ENCODE measurements at regions of chr3 and their contacts with region 1.

Region 1: GRCh38 chr3:169149349-169149890 is 514.1 kb downstream of the MECOM start:
- DNase-seq: peak; percentile 84 to 85
- ATAC-seq: peak; percentile 80 to 91 (median 82)
- H3K4me3 ChIP-seq: peak overlapping the region in 9 of 10 donors; percentile 13 to 69 (median 61)
- H3K27ac ChIP-seq: peak overlapping the region; percentile 26 to 96 (median 78)
- H3K4me1 ChIP-seq: peaks cover 0 to 38% (median 16%) of the 10 kb centered on the region in 9 donors
- H3K27me3 ChIP-seq: peaks cover 0 to 78% (median 32%) of the 10 kb centered on the region in 7 donors
- CTCF ChIP-seq: peak; percentile 67 to 93 (median 86)

Region 2: GRCh38 chr3:169041677-169042171 is 107.7 kb before region 1 on chr3:
- intact Hi-C with region 1: loop called in 1 of 10 experiments (anchors 10 kb)
- DNase-seq: no peak
- ATAC-seq: peak in 6 of 8 donors; percentile 20 to 79 (median 68)
- H3K4me3 ChIP-seq: peak overlapping the region in 3 of 10 donors; percentile 11 to 24 (median 13)
- H3K27ac ChIP-seq: peak overlapping the region in 6 of 10 donors; percentile 10 to 38 (median 27)
- H3K4me1 ChIP-seq: peaks cover 0 to 7% (median 0%) of the 10 kb centered on the region in 9 donors
- H3K27me3 ChIP-seq: no peaks in the 10 kb centered on the region
- CTCF ChIP-seq: peak; percentile 27 to 75 (median 59)

Region 3: DNA sequence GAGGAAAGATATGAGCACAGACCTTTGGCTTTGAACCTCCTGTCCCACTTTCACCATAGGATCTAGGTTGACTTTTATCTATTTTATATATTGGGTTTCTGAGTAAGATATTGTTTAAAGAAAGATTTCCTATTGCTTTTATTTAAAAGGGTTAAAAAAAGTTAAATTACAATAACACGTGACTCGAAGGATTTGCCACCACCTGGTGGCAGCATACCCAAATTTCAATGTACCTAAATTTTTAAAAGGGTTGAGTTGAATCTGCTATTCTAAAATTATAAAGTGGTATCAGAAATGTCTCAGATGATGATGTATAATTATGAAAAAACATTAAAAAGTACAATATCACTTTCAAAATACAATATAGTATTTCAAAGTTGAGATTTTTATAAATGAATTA is 145.7 kb after region 1 on chr3:
- intact Hi-C with region 1: loop called in 3 of 10 experiments (anchors 5 to 10 kb)
- DNase-seq: no peak
- ATAC-seq: no peak
- H3K4me3 ChIP-seq: no peak overlapping the region
- H3K27ac ChIP-seq: no peak overlapping the region
- H3K4me1 ChIP-seq: peaks cover 0 to 18% (median 0%) of the 10 kb centered on the region in 9 donors
- H3K27me3 ChIP-seq: no peaks in the 10 kb centered on the region
- CTCF ChIP-seq: peak in 8 of 9 donors; percentile 17 to 52 (median 36)

Region 4: DNA sequence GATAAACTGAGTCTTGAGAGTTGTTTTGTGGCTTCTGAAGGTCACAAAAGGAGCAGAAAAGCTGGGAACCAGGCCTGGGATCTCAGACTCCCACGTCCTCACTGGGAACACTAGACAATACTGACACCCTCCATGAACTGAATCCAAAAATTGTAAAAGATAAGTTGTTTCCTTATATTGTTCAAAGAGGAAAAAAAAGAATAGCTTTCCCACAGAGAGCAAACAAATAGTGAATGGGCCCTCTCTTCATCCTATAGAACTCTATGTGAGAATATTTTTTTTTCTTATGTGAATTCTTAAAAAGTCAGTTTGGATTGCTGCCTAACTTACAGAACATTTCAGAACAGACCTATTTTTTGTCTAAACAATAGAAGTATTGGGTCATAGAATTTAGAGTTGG is 310.6 kb after region 1 on chr3:
- intact Hi-C with region 1: loop called in 1 of 10 experiments (anchors 10 kb)
- DNase-seq: peak in 1 of 2 donors; percentile 42
- ATAC-seq: peak in 5 of 8 donors; percentile 74 to 82 (median 79)
- H3K4me3 ChIP-seq: no peak overlapping the region
- H3K27ac ChIP-seq: peak overlapping the region in 4 of 10 donors; percentile 12 to 67 (median 60)
- H3K4me1 ChIP-seq: peaks cover 0 to 42% (median 5%) of the 10 kb centered on the region in 9 donors
- H3K27me3 ChIP-seq: no peaks in the 10 kb centered on the region
- CTCF ChIP-seq: no peak